ENCODE measurements at regions of chr13 and their contacts with region 1.

Region 1: GRCh38 chr13:26861941-26862340 is 101.4 kb upstream of the GPR12 start:
- DNase-seq: no peak
- H3K4me3 ChIP-seq: no peak overlapping the region
- H3K27ac ChIP-seq: no peak overlapping the region
- H3K4me1 ChIP-seq: no peaks in the 10 kb centered on the region
- H3K27me3 ChIP-seq: peaks cover 15% of the 10 kb centered on the region; the same call in 1 of the 2 replicates
- CTCF ChIP-seq: no peak

Region 2: GRCh38 chr13:26914624-26915023 is 52.7 kb after region 1 on chr13:
- CTCF ChIA-PET with region 1: interaction called, 14 read pairs
- POLR2A ChIA-PET with region 1: no interaction called
- intact Hi-C with region 1: no loop called
- DNase-seq: no peak
- H3K4me3 ChIP-seq: no peak overlapping the region
- H3K27ac ChIP-seq: no peak overlapping the region
- H3K4me1 ChIP-seq: no peaks in the 10 kb centered on the region
- H3K27me3 ChIP-seq: peaks cover 99% of the 10 kb centered on the region
- CTCF ChIP-seq: no peak